ENCODE measurements at regions of chr2 and their contacts with region 1.

Region 1: DNA sequence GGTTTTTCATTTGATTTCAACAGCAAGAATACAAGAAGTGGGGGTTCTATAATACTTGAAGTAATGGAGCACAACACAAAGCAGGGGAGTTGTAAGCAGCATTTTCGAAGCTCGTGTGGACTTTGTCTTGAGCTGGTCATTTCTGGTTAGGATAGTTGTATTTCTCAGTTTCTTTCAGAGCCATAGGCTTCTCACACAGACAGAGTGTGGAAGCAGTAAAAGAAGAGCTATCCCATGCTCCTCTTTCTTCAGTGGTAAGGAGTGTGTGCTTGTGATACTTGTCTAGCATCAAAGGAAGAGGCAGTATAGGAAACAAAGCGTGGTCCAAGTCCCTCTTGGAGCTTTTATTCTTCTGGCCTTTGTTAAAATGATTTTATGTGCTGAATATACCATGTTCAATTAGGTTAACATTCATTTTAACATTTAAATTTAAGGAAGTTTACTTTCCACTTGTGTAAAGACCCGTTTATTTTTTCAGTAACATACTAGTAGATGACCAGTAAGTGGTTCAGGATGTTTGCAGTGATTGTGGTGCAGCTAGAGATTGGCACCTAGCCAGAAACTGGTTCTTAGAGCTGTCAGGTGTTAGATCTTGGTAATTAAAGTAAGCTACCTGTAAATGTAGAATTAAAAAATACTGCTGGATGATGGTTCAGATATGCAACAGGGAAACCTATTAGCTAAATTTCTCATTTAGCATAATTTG is 14.6 kb downstream of the CCNYL1 start:
- DNase-seq: no peak
- H3K4me3 ChIP-seq: no peak overlapping the region
- H3K27ac ChIP-seq: no peak overlapping the region
- H3K4me1 ChIP-seq: peaks cover 0 to 8% (median 6%) of the 10 kb centered on the region in 4 experiments
- H3K27me3 ChIP-seq: no peaks in the 10 kb centered on the region

Region 2: DNA sequence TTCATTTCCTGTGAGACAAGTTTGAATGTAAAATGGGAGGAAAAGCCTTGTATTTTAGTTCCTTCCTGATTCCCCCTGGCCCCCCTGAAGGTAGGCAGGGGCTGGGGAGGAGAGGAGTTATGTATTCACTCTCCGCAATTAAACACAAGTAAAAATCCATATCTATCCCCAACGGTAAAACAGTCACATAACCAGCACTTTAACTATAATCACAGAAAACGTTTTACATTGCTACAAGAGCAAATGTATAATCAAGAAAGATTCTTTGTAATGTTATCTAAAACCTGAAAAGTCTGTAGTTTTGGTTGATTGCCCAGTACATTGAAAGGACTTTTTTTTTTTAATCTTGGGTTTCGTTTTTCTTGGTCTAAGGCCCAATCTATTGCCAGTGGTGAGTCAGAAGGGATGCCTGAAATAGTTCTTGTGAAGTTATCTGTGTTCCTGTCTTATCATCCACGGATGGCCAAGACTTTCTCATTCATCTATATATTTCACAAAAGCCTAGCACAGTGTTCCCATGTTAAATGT is 49.1 kb before region 1 on chr2:
- CTCF ChIA-PET with region 1: no interaction called
- POLR2A ChIA-PET with region 1: no interaction called
- DNase-seq: no peak
- H3K4me3 ChIP-seq: no peak overlapping the region
- H3K27ac ChIP-seq: no peak overlapping the region
- H3K4me1 ChIP-seq: peaks cover 0 to 2% (median 0%) of the 10 kb centered on the region in 4 experiments
- H3K27me3 ChIP-seq: peaks cover 0 to 10% (median 0%) of the 10 kb centered on the region in 5 experiments

Region 3: GRCh38 chr2:207710814-207711740 is 14.9 kb before region 1 on chr2 and contains the start of gene CCNYL1:
- CTCF ChIA-PET with region 1: interaction called, 15 read pairs
- POLR2A ChIA-PET with region 1: interaction called, 3 read pairs
- DNase-seq: peak; percentile 99 to 100 (median 99)
- H3K4me3 ChIP-seq: peak within 1 kb of the TSS; percentile 55 to 98 (median 94)
- H3K27ac ChIP-seq: peak within 1 kb of the TSS; percentile 52 to 88
- H3K4me1 ChIP-seq: peaks cover 0 to 26% (median 19%) of the 10 kb centered on the region in 4 experiments
- H3K27me3 ChIP-seq: no peaks in the 10 kb centered on the region

Measured in common myeloid progenitor, CD34-positive (primary cell).